Activated CD4-positive, alpha-beta memory T cell treated with anti-CD3 and anti-CD28 coated beads, Interleukin-2, amount 10 ng/mL, durations not matched to agents 7 days and 5 days (primary cell): ENCODE measurements at regions of chr15 and their contacts with region 1.

Region 1: DNA sequence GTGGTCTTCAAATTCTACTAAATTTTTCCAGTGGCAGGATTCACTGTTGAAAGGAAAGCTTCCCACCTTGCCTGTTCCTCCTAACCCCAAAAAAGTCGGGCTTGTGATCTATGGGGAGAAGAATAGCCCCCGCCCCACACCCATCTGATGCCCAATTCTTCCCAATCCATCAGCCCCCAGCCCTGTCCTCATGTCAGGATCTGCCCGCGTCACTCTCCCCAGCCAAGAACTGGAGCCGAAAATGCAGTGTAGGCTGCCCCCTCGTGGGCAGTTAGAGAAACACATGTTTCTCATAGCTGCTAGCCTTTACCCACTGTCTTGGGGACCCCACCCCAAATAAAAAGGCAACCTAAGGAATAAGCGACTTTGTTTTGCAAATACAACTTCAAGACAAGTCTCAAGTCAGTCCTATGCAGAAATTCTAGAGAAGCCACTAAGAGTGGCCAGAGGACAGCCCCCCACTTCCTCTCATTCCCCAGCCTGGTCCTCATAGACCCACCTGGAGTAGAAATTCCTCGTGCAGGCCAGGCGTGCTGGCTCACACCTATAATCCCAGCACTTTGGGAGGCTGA is 13.0 kb upstream of the CSK start:
- DNase-seq: peak; percentile 71
- H3K4me3 Mint-ChIP-seq: no peak overlapping the region
- H3K27ac Mint-ChIP-seq: no peak overlapping the region
- H3K4me1 Mint-ChIP-seq: peaks cover 19% of the 10 kb centered on the region
- H3K27me3 Mint-ChIP-seq: peaks cover 8% of the 10 kb centered on the region

Region 2: DNA sequence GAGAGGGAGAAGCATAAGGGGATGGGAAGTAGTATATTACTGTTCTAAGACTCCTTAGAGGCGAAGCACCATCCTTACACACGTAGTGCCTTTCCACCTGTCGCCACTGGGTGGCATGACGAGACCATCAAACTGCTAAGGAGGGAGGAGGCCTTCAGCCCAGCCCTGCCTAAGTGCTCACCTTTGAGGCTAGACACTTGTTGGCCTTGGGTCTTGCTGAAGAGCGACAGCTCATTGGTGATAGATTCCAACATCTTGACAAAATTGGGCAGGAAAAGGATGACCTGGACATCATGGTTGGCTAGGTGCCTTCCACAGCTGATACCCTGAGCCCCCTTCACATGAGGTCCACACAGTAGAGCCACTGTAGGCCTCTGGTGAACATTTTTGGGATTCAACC is 133.6 kb before region 1 on chr15:
- CTCF ChIA-PET with region 1: interaction called, 329 read pairs
- POLR2A ChIA-PET with region 1: interaction called, 48 read pairs
- DNase-seq: peak; percentile 81
- H3K4me3 Mint-ChIP-seq: no peak overlapping the region
- H3K27ac Mint-ChIP-seq: no peak overlapping the region
- H3K4me1 Mint-ChIP-seq: no peaks in the 10 kb centered on the region
- H3K27me3 Mint-ChIP-seq: no peaks in the 10 kb centered on the region

Region 3: GRCh38 chr15:74695597-74696397 is 73.1 kb before region 1 on chr15 and contains the start of gene EDC3:
- CTCF ChIA-PET with region 1: interaction called, 11 read pairs
- POLR2A ChIA-PET with region 1: no interaction called
- DNase-seq: peak; percentile 86
- H3K4me3 Mint-ChIP-seq: peak within 1 kb of the TSS; percentile 100
- H3K27ac Mint-ChIP-seq: peak within 1 kb of the TSS; percentile 96
- H3K4me1 Mint-ChIP-seq: peaks cover 42% of the 10 kb centered on the region
- H3K27me3 Mint-ChIP-seq: no peaks in the 10 kb centered on the region
- total RNA-seq, gene EDC3: 36.3 to 39.6 TPM

Region 4: GRCh38 chr15:74716644-74717043 is 52.2 kb before region 1 on chr15:
- CTCF ChIA-PET with region 1: no interaction called
- POLR2A ChIA-PET with region 1: no interaction called
- DNase-seq: no peak
- H3K4me3 Mint-ChIP-seq: no peak overlapping the region
- H3K27ac Mint-ChIP-seq: no peak overlapping the region
- H3K4me1 Mint-ChIP-seq: no peaks in the 10 kb centered on the region
- H3K27me3 Mint-ChIP-seq: no peaks in the 10 kb centered on the region

Region 5: DNA sequence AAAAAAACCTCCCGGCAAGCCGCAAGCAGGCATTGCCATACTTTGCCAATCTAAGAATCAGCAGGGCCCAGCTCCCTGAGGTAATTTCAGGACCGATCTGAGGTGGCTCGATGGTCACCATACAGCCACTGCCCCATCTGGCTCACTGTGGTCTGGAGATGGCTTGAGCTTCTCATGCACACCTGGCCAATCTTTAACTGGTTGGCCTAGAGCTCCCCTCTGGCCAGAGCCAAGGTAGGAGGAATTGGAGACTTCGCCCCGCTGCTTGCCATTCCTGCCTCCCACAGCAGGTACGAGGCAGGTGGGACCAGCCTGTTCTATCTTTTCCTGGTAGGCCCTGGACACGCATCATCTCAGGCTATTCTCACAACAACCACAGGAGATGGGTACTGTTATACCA is 10.1 kb before region 1 on chr15:
- CTCF ChIA-PET with region 1: interaction called, 20 read pairs
- POLR2A ChIA-PET with region 1: no interaction called
- DNase-seq: no peak
- H3K4me3 Mint-ChIP-seq: no peak overlapping the region
- H3K27ac Mint-ChIP-seq: no peak overlapping the region
- H3K4me1 Mint-ChIP-seq: no peaks in the 10 kb centered on the region
- H3K27me3 Mint-ChIP-seq: peaks cover 3% of the 10 kb centered on the region

Region 6: DNA sequence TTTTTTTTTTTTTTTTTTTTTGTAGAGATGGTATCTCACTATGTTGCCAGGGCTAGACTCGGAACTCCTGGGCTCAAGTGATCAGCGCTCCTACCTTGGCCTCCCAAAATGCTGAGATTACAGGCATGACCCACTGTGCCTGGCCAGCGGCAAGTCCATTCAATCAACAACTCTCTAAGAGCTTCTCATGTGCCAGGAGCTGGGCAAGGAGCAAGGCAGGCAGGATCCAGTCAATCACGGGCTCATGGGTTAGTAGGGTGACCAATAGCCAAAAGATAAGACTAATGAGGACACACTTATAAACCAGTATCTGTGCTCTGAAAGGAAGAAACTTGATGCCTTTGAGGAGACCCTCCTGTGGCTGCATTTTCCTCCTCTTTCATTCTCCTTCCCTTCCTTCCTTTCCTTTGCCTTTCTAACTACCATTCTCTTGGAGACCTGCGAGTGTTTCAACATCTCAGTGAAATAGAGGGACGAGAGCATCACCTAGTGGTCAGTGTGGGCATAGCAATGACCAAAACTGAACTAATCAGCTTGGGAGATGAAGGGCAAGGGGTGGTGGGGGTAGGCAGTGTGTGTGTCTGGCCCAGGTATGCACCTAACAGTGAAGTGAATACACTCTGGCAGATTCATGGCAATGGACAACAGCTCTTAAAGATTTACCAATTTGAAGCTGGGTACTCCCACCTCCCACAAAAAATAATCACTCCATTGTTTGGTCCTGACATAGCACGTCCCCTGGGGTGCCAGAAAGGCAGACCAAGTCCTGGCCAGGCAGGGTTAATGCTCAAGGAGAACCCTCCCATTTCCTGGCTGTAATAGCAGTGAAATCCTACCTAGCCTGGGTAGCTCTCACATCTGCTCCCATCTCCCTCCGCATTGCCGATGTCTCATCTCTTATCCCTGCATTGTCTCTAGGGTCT is 181.5 kb after region 1 on chr15:
- CTCF ChIA-PET with region 1: interaction called, 73 read pairs
- POLR2A ChIA-PET with region 1: interaction called, 6 read pairs
- DNase-seq: peak; percentile 83
- H3K4me3 Mint-ChIP-seq: no peak overlapping the region
- H3K27ac Mint-ChIP-seq: no peak overlapping the region
- H3K4me1 Mint-ChIP-seq: peaks cover 15% of the 10 kb centered on the region
- H3K27me3 Mint-ChIP-seq: peaks cover 1% of the 10 kb centered on the region